PC-9 (cell line): ENCODE measurements at regions of chr11 and their contacts with region 1.

Region 1: GRCh38 chr11:66386171-66387069 is 14.9 kb upstream of the SLC29A2 start:
- DNase-seq: peak; percentile 79 to 82
- H3K4me3 ChIP-seq: peak overlapping the region; percentile 37; the same call in 1 of the 2 replicates
- H3K27ac ChIP-seq: no peak overlapping the region
- H3K4me1 ChIP-seq: no peaks in the 10 kb centered on the region
- H3K27me3 ChIP-seq: peaks cover 6% of the 10 kb centered on the region; the same call in 1 of the 2 replicates
- CTCF ChIP-seq: peak; percentile 97

Region 2: GRCh38 chr11:66328307-66329144 is 57.9 kb before region 1 on chr11:
- CTCF ChIA-PET with region 1: interaction called, 23 read pairs
- POLR2A ChIA-PET with region 1: no interaction called
- intact Hi-C with region 1: no loop called
- DNase-seq: peak; percentile 67 to 80
- H3K4me3 ChIP-seq: no peak overlapping the region
- H3K27ac ChIP-seq: no peak overlapping the region
- H3K4me1 ChIP-seq: peaks cover 34% of the 10 kb centered on the region
- H3K27me3 ChIP-seq: no peaks in the 10 kb centered on the region
- CTCF ChIP-seq: peak; percentile 99

Region 3: DNA sequence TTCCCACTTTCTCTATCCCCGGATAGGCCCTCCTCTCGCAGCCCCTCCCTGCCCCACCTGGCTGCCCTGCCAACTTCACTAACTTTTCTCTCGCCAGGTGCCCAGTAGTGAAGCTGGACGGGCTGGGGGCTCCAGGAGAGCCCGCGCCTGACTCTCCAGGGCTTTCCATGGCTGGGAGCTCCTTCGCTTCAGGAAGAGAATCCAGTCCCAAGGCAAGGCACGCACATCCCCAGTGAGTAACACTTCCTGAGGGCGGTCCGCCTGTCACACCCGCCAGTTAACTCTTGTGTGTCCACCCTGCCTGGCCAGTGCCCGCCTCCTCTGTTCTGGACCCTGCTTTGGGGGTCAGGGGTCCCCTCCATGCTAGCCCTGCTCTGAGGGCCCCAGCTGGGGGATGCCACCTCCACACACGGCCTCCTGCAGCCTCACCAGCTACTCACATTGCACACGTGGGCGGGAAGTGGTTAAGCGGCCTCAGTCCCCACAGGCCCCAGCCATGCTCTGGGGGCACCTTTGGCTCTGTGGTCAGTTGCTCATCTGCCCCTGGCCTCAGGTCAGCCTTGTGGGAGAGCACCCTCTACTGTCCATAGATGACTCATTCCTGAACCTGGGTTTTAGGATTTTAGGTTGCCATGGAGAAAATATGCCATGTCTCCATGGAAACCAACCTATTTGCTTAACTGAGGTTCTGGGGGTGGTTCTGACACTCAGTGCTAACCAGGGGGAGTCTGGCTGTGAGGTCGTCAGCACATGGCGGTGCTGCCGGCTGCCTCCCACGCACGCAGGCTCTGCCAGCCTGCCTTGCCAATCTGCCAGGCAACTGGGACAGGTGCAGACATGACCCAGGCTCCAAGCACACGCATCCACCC is 50.0 kb before region 1 on chr11 and contains the start of gene RIN1:
- CTCF ChIA-PET with region 1: interaction called, 10 read pairs
- POLR2A ChIA-PET with region 1: no interaction called
- intact Hi-C with region 1: no loop called
- DNase-seq: peak; percentile 90 to 92
- H3K4me3 ChIP-seq: peak within 1 kb of the TSS; percentile 79
- H3K27ac ChIP-seq: peak within 1 kb of the TSS; percentile 65
- H3K4me1 ChIP-seq: peaks cover 16% of the 10 kb centered on the region
- H3K27me3 ChIP-seq: no peaks in the 10 kb centered on the region
- CTCF ChIP-seq: peak; percentile 52
- total RNA-seq, gene RIN1: 15.5 and 19.5 TPM in 2 replicates

Region 4: DNA sequence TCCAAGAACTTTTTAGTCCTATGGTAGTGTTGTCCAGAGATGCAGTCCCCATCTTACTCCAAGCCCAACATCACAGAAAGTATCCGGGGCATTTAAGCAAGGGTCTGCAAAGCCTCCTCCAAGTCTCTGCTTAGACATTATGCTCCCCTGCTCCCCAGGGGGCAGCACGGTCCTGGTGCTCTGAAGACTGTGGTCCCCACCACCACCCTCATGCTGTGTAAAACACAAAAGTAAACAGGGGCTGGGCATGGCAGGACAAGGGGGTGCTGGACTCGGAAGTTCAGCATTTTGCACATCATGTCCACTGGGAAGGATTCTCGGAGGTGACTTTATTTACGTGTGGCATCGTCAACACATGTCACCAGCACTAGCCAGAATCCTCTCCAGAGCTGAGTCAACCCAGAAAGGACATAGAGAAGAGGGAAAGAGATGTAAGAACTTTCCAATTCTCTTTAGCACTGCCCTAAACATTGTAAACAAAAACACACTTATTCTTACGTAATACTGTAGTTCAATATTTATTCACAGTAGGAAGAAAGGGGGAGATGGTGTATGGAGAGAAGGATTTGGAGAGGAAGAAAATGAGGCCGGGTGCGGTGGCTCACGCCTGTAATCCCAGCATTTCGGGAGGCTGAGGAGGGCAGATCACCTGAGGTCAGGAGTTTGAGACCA is 1690.1 kb after region 1 on chr11:
- CTCF ChIA-PET with region 1: no interaction called
- POLR2A ChIA-PET with region 1: no interaction called
- intact Hi-C with region 1: no loop called
- DNase-seq: no peak
- H3K4me3 ChIP-seq: no peak overlapping the region
- H3K27ac ChIP-seq: no peak overlapping the region
- H3K4me1 ChIP-seq: peaks cover 14% of the 10 kb centered on the region
- H3K27me3 ChIP-seq: no peaks in the 10 kb centered on the region
- CTCF ChIP-seq: no peak